Colonic mucosa (tissue), 4 donors: ENCODE measurements at regions of chr18 and their contacts with region 1.

Region 1: DNA sequence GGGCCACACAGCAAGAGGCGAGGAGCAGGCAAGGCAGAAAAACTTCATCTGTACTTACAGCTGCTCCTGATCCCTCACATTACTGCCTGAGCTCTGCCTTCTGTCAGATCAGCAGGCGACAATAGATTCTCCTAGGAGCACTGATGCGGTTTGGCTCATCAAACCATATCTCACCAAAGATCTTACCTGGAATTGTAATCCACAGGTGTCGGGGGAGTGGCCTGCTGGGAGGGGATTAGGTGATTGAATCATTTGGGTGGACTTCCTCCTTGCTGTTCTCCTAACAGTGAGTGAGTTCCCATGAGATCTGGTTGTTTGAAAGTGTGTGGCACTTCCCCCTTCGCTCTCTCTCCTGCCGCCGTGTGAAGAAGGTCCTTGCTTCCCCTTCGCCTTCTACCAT is 647.3 kb downstream of the SOCS6 start:
- DNase-seq: no peak
- H3K4me3 ChIP-seq: no peak overlapping the region
- H3K27ac ChIP-seq: no peak overlapping the region
- H3K4me1 ChIP-seq: no peaks in the 10 kb centered on the region
- H3K27me3 ChIP-seq: no peaks in the 10 kb centered on the region
- CTCF ChIP-seq: no peak

Region 2: GRCh38 chr18:70754486-70754885 is 181.7 kb before region 1 on chr18:
- intact Hi-C with region 1: no loop called
- DNase-seq: no peak
- H3K4me3 ChIP-seq: no peak overlapping the region
- H3K27ac ChIP-seq: no peak overlapping the region
- H3K4me1 ChIP-seq: no peaks in the 10 kb centered on the region
- H3K27me3 ChIP-seq: no peaks in the 10 kb centered on the region
- CTCF ChIP-seq: no peak

Region 3: GRCh38 chr18:72544092-72544886 is 1608.1 kb after region 1 on chr18 and contains the start of gene CBLN2:
- intact Hi-C with region 1: loop called (anchors 5 kb)
- DNase-seq: peak; percentile 36
- H3K4me3 ChIP-seq: no peak within 1 kb of the TSS
- H3K27ac ChIP-seq: no peak within 1 kb of the TSS
- H3K4me1 ChIP-seq: no peaks in the 10 kb centered on the region
- H3K27me3 ChIP-seq: peaks cover 21% of the 10 kb centered on the region
- CTCF ChIP-seq: no peak
- total RNA-seq, gene CBLN2: 0.96 to 1.1 TPM